ENCODE measurements at regions of chr14 and their contacts with region 1.

Region 1: GRCh38 chr14:74913986-74914573 is 9.0 kb downstream of the RPS6KL1 start:
- DNase-seq: peak; percentile 73 to 82
- H3K4me3 ChIP-seq: no peak overlapping the region
- H3K27ac ChIP-seq: no peak overlapping the region
- H3K4me1 ChIP-seq: peaks cover 8% of the 10 kb centered on the region
- H3K27me3 ChIP-seq: no peaks in the 10 kb centered on the region
- CTCF ChIP-seq: peak; percentile 88

Region 2: GRCh38 chr14:73878436-73878835 is 1035.6 kb before region 1 on chr14:
- CTCF ChIA-PET with region 1: no interaction called
- POLR2A ChIA-PET with region 1: no interaction called
- intact Hi-C with region 1: no loop called
- DNase-seq: no peak
- H3K4me3 ChIP-seq: no peak overlapping the region
- H3K27ac ChIP-seq: no peak overlapping the region
- H3K4me1 ChIP-seq: no peaks in the 10 kb centered on the region
- H3K27me3 ChIP-seq: no peaks in the 10 kb centered on the region
- CTCF ChIP-seq: no peak

Region 3: GRCh38 chr14:75041613-75042012 is 127.5 kb after region 1 on chr14:
- CTCF ChIA-PET with region 1: no interaction called
- POLR2A ChIA-PET with region 1: no interaction called
- intact Hi-C with region 1: no loop called
- DNase-seq: peak; percentile 57 to 68
- H3K4me3 ChIP-seq: peak overlapping the region; percentile 0; the same call in 1 of the 2 replicates
- H3K27ac ChIP-seq: peak overlapping the region; percentile 39
- H3K4me1 ChIP-seq: peaks cover 38% of the 10 kb centered on the region
- H3K27me3 ChIP-seq: no peaks in the 10 kb centered on the region
- CTCF ChIP-seq: no peak

Region 4: GRCh38 chr14:75088574-75089373 is 174.7 kb after region 1 on chr14:
- CTCF ChIA-PET with region 1: interaction called, 6 read pairs
- POLR2A ChIA-PET with region 1: no interaction called
- intact Hi-C with region 1: loop called (anchors 1 kb)
- DNase-seq: peak; percentile 59 to 67
- H3K4me3 ChIP-seq: no peak overlapping the region
- H3K27ac ChIP-seq: no peak overlapping the region
- H3K4me1 ChIP-seq: no peaks in the 10 kb centered on the region
- H3K27me3 ChIP-seq: no peaks in the 10 kb centered on the region
- CTCF ChIP-seq: peak; percentile 99